Body of pancreas (tissue), 4 donors: ENCODE measurements at regions of chr14 and their contacts with region 1.

Region 1: DNA sequence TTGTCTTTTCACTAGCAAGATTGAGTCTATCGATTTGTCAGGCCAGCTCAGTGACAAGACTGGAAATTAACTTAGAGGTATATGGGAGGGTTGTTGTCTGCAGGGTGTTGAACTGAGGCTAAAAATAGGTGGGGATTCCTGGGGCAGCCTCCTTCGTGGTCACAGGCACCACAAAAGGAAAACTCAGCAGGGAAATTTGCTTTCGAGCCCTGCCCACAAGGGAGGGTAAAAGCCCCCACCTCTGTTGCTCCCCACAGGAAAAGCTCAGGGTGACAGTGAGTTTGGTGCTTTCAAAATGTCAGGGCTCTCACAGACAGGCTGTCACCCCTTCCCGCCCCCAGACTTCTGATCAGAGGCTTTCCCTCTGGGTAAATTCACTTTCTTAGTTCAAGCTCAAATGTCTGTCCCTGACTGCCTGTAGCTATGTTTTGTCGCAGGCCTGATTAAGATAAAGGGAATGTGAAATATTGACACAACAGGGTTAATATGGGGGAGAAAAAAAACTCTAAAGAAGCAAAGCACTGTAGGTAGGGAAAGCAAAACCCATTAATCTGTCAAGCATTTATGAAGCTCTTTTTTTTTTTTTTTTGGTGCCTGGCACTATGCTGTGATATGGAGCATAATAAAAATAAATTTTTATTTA is 11.7 kb upstream of the NFKBIA start:
- DNase-seq: no peak
- ATAC-seq: no peak
- H3K4me3 ChIP-seq: no peak overlapping the region
- H3K27ac ChIP-seq: no peak overlapping the region
- H3K4me1 ChIP-seq: peaks cover 4% of the 10 kb centered on the region
- H3K27me3 ChIP-seq: no peaks in the 10 kb centered on the region
- CTCF ChIP-seq: no peak
- POLR2A ChIP-seq: no peak

Region 2: GRCh38 chr14:34971381-34971780 is 444.8 kb before region 1 on chr14:
- intact Hi-C with region 1: loop called (anchors 10 kb)
- DNase-seq: no peak
- ATAC-seq: no peak
- H3K4me3 ChIP-seq: no peak overlapping the region
- H3K27ac ChIP-seq: no peak overlapping the region
- H3K4me1 ChIP-seq: no peaks in the 10 kb centered on the region
- H3K27me3 ChIP-seq: no peaks in the 10 kb centered on the region
- CTCF ChIP-seq: no peak
- POLR2A ChIP-seq: no peak

Region 3: DNA sequence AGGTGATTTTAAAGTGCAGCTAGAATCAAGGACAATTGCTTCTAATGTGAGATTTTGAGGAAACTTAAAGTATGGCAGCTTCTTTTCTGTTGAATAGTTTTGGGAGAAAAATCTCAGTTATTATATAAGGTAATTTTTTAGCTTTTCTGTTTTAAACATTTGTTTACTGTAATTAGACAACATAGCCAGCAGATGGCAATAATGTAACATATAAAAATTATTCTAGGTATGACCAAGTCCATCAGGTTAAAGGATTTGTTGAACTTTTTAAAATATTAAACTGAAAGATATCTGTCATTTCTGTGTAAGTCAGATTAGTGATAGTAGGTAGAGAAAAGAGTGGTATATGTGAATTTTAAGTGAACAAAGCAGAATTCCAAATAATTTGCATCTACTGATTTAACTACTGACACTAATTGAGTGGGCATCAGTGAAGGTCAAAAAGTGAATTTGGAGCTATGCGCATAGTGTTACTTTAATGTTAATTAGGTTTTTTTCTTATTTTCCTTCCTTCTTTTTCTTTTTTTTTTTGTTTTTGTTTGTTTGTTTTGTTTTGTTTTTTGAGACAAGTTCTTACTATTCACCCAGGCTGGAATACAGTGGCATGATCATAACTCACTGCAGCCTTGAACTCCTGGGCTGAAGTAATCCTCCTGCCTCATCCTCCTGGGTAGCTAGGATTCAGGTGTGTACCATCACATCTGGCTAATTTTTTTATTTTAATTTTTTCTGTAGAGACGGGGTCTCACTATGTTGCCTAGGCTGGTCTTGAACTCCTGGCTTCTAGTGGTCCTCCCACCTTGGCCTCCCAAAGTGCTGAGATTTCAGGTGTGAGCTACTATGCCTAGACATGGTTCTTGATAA is 275.3 kb before region 1 on chr14:
- intact Hi-C with region 1: loop called (anchors 5 kb)
- DNase-seq: no peak
- ATAC-seq: no peak
- H3K4me3 ChIP-seq: no peak overlapping the region
- H3K27ac ChIP-seq: no peak overlapping the region
- H3K4me1 ChIP-seq: no peaks in the 10 kb centered on the region
- H3K27me3 ChIP-seq: no peaks in the 10 kb centered on the region
- CTCF ChIP-seq: peak in 5 of 7 experiments; percentile 18 to 67 (median 46)
- POLR2A ChIP-seq: no peak

Region 4: GRCh38 chr14:35229495-35230089 is 186.6 kb before region 1 on chr14:
- intact Hi-C with region 1: loop called (anchors 10 kb)
- DNase-seq: no peak
- ATAC-seq: no peak
- H3K4me3 ChIP-seq: no peak overlapping the region
- H3K27ac ChIP-seq: no peak overlapping the region
- H3K4me1 ChIP-seq: no peaks in the 10 kb centered on the region
- H3K27me3 ChIP-seq: no peaks in the 10 kb centered on the region
- CTCF ChIP-seq: peak in 5 of 7 experiments; percentile 20 to 32 (median 29)
- POLR2A ChIP-seq: no peak

Region 5: DNA sequence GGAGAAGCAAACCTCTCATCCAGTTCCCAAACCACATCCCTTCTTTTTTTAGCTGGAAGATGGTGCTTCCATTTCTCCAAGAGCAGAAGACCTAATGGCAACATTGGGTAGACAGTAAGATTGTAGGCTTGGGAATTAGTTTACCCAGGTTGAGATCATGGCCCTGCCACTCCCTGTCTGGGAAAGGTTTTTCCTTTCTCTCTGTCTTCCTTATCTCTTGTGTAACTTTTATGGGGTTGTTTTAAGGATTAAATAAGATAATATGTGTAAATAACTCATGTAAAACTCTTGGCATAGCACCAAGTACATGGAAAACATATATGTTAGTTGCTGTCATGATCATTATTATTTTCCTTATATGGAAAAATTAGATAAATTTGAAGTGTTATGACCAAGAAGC is 147.3 kb before region 1 on chr14:
- intact Hi-C with region 1: no loop called
- DNase-seq: no peak
- ATAC-seq: no peak
- H3K4me3 ChIP-seq: no peak overlapping the region
- H3K27ac ChIP-seq: no peak overlapping the region
- H3K4me1 ChIP-seq: no peaks in the 10 kb centered on the region
- H3K27me3 ChIP-seq: no peaks in the 10 kb centered on the region
- CTCF ChIP-seq: no peak
- POLR2A ChIP-seq: no peak